PC-9 (cell line): ENCODE measurements at regions of chr15 and their contacts with region 1.

Region 1: DNA sequence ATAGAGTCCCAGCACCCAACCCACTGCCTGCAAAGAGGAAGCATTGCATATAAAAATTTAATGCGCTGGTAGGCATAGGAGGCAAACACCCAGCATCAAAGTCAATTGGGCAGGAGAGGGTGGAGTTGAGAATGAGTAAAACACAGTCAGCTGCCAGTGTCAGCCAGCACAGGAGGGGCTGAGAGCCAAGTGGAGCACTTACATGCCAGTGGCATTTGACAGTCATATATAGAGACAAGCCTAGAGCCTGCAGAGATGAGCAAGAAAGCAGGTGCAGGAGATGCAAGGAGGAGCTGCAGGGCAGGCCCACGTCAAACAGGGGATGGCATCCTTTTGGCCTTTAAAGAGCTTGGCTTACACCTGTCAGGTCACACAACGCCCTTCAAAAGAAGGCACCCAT is 27.6 kb upstream of the ZFAND6 start:
- DNase-seq: no peak
- H3K4me3 ChIP-seq: no peak overlapping the region
- H3K27ac ChIP-seq: peak overlapping the region; percentile 95
- H3K4me1 ChIP-seq: peaks cover 31% of the 10 kb centered on the region
- H3K27me3 ChIP-seq: no peaks in the 10 kb centered on the region
- CTCF ChIP-seq: no peak

Region 2: GRCh38 chr15:79989682-79990081 is 42.2 kb before region 1 on chr15:
- CTCF ChIA-PET with region 1: no interaction called
- POLR2A ChIA-PET with region 1: no interaction called
- intact Hi-C with region 1: loop called (anchors 1 kb)
- DNase-seq: peak in 1 of 2 experiments; percentile 48
- H3K4me3 ChIP-seq: no peak overlapping the region
- H3K27ac ChIP-seq: no peak overlapping the region
- H3K4me1 ChIP-seq: peaks cover 20% of the 10 kb centered on the region
- H3K27me3 ChIP-seq: no peaks in the 10 kb centered on the region
- CTCF ChIP-seq: no peak

Region 3: DNA sequence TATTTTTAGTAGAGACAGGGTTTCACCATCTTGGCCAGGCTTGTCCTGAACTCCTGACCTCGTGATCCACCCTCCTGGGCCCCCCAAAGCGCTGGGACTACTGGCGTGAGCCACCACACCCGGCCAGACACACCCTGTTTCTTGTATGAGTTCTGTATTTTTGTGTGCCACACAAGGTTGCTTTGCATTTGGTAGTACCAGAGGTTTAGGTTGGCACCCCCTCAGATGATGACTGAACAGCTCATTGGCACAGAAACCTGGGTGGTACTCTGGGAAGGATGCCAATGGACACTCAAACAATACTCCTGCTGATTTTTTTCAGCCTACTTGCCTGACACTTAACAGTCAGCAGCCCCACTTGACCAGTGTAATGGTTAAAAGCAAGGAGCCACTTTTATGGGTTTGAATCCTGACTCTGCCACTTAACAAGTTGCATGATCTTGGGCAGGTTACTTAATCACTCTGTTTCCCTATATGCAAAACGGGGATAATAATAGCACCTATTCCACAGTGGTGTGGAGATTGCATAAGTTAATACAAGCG is 21.6 kb before region 1 on chr15:
- CTCF ChIA-PET with region 1: no interaction called
- POLR2A ChIA-PET with region 1: no interaction called
- intact Hi-C with region 1: loop called (anchors 1 kb)
- DNase-seq: peak in 1 of 2 experiments; percentile 56
- H3K4me3 ChIP-seq: no peak overlapping the region
- H3K27ac ChIP-seq: peak overlapping the region; percentile 66
- H3K4me1 ChIP-seq: peaks cover 20% of the 10 kb centered on the region
- H3K27me3 ChIP-seq: no peaks in the 10 kb centered on the region
- CTCF ChIP-seq: no peak